GM10248 (cell line): ENCODE measurements at regions of chr16 and their contacts with region 1.

Region 1: DNA sequence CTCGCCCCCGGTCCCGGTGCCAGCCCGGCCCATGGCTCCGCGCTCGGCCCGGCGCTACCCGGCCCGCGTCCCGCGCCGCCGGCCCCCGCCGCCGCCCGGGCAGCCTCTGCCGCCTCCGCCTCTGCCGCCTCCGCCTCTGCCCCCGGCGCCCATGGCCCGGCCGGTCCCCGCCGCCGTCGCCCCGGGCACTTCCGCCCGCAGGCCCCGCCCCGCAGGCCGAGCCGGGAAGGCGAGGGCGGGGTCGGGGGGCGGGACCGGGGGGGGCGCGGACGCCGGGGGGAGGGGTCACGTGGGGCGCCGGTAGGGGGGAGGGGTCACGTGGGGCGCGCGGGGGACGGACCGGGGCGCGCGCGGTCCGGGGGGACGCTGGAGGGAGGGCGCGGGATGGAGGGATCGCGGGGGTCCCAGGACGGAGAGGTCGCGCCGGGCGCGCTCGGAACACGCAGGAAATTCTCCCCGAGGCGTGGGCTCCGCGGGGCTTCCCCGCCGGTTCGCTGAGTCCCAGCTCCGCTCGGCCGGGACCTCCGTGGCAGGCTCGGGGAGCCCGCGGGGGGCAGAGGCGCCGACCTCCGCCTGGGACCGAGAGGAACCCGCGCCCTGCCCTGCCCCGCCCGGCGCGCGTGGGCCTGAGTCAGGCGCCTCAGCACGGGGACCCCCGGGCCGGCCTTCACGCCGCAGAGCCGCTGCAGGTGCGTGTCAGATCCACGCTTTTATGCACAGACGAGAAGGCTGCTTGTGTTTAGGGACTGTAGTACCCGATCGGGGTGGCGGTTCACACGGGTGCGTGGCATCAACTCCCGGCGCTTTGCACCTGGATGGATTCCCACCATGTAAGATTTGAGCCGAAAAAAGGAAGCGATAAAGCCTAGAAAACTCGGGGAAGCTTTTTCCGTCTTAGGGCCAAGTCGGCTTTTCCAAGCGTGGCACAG is at the start of gene PGAP6:
- DNase-seq: peak; percentile 94
- CTCF ChIP-seq: no peak

Region 2: DNA sequence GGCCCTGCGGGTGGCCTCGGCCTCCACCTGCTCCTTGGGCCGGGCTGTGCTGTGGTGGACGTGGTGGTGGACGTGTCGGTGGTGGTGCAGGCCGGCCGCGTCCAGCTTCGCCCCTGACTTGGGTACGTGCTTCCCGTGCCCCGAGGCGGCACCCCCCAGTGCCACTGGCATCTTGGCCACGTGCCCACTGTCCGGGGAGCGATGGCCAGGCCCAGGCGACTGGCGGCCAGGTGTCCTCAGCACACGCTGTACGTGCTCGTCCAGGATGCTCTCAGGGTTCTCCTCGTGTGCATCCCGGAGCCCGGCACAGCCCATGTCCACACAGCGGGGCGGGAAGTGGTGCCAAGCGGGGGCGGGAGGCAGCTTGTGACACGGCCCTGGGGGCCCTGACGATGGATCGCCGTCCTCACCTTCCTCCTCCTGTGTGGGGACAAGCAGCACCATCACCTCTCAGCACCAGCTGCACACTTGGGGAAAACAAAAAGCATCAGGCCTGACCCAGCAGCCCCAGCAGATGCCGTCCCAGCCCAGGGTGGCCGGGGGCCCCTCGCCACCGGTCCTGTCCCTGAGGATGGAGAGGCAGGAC is 84.1 kb before region 1 on chr16:
- CTCF ChIA-PET with region 1: no interaction called
- POLR2A ChIA-PET with region 1: no interaction called
- DNase-seq: no peak
- CTCF ChIP-seq: no peak

Region 3: DNA sequence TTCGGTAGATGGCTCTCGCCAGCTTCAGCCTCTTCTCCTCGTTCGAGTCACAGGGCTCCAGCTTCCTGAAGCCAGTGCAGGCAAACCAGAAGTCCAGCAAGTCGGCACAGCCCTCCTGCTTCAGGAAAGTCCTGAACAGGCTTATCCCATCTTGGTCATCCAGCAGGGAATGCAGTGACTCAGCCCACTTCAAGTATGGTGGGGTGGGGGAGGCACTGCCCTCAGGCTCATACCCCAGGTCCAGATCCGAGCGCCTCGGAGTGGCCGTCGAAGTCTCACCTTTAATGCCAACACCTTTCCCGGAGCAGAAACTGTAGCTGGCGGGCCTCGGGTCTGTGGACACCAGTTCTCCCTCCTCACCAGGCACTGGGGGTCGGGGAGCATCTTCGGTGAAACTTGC is 35.5 kb before region 1 on chr16:
- CTCF ChIA-PET with region 1: no interaction called
- POLR2A ChIA-PET with region 1: no interaction called
- DNase-seq: no peak
- CTCF ChIP-seq: no peak

Region 4: DNA sequence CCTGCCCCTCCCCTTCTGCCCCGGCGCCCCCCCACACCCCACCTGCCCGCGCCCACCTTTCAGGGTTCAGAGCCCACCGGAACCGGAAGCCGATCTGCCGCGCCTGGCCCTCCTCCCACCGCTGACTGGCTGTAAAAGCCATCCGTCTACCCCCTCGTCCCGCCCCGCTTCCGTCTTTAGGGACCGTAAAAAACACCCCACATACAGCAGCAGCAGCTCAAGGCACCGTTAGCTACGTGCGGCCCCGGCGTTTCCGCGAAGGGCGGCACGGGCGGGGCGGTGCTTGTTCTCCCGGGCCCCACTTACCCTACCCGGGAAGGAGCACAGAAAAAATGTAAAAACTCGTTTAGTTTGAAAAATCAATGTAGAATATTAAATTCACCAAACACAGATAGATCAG is 11.6 kb before region 1 on chr16 and contains the start of gene MRPL28:
- CTCF ChIA-PET with region 1: no interaction called
- POLR2A ChIA-PET with region 1: no interaction called
- DNase-seq: peak; percentile 98
- CTCF ChIP-seq: no peak

Region 5: DNA sequence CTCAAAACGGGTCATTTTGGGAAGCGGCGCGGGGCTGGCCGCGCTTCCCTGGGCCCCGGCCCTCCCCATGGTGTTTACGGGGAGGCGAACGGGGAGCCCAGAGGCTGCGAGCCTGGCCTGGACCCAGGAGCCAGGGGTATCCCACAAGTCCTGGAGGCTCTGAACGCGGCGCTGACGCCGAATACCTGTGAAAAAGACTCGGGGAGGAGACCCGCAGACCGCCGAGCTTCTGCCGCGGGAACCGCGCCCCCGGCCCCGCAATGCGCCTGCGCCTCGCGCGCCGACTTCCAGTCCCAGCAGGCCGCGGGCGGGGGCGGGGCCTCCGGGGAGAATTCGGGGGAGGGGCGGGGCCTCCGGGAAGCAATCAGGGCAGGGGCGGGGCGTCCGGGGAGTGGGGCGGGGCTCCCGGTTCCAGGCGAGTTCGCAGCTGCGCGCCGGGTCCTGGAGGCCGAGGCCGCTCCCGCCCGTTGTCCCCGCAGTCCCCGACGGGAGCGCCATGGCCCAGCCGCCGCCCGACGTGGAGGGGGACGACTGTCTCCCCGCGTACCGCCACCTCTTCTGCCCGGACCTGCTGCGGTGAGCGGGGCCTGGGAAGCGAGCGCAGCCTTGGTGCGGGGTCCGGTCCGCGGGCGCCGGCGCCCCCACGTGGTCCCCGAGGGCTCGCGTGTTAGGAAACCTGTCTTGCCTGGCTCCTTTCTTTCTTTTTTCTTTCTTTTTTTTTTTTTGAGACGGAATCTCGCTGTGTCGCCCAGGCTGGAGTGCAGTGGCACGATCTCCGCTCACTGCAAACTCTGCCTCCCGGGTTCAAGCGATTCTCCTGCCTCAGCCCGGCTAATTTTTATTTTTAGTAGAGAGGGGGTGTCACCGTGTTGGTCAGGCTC is 19.7 kb after region 1 on chr16 and contains the start of gene DECR2:
- CTCF ChIA-PET with region 1: interaction called, 5 read pairs
- POLR2A ChIA-PET with region 1: interaction called, 11 read pairs
- DNase-seq: peak; percentile 99
- CTCF ChIP-seq: peak; percentile 54